CD8-positive, alpha-beta T cell (primary cell): ENCODE measurements at regions of chr20 and their contacts with region 1.

Region 1: GRCh38 chr20:44990425-44990824 is 24.1 kb downstream of the STK4 start:
- DNase-seq: peak in 3 of 9 experiments; percentile 22 to 55 (median 26)
- ATAC-seq: peak; percentile 54
- H3K4me3 ChIP-seq: peak overlapping the region; percentile 23 to 24
- H3K4me3 Mint-ChIP-seq: peak overlapping the region; percentile 82
- H3K27ac ChIP-seq: peak overlapping the region; percentile 11 to 69
- H3K27ac Mint-ChIP-seq: peak overlapping the region; percentile 95
- H3K4me1 ChIP-seq: peaks cover 57% of the 10 kb centered on the region
- H3K4me1 Mint-ChIP-seq: peaks cover 84% of the 10 kb centered on the region
- H3K27me3 ChIP-seq: no peaks in the 10 kb centered on the region
- H3K27me3 Mint-ChIP-seq: no peaks in the 10 kb centered on the region
- CTCF ChIP-seq: no peak

Region 2: GRCh38 chr20:44960103-44960852 is 30.1 kb before region 1 on chr20 and contains the start of gene TOMM34:
- CTCF ChIA-PET with region 1: interaction called, 6 read pairs
- POLR2A ChIA-PET with region 1: interaction called, 6 read pairs
- intact Hi-C with region 1: loop called (anchors 1 to 5 kb)
- DNase-seq: peak; percentile 84 to 97 (median 95)
- ATAC-seq: peak; percentile 94
- H3K4me3 ChIP-seq: peak within 1 kb of the TSS; percentile 70 to 80
- H3K4me3 Mint-ChIP-seq: peak within 1 kb of the TSS; percentile 96
- H3K27ac ChIP-seq: peak within 1 kb of the TSS; percentile 58 to 60
- H3K27ac Mint-ChIP-seq: peak within 1 kb of the TSS; percentile 96
- H3K4me1 ChIP-seq: peaks cover 32% of the 10 kb centered on the region
- H3K4me1 Mint-ChIP-seq: peaks cover 56% of the 10 kb centered on the region
- H3K27me3 ChIP-seq: no peaks in the 10 kb centered on the region
- H3K27me3 Mint-ChIP-seq: no peaks in the 10 kb centered on the region
- CTCF ChIP-seq: no peak
- total RNA-seq, gene TOMM34: 11.9 to 12.4 TPM

Region 3: GRCh38 chr20:44966030-44966961 is 24.1 kb before region 1 on chr20 and contains the start of gene STK4:
- CTCF ChIA-PET with region 1: interaction called, 6 read pairs
- POLR2A ChIA-PET with region 1: interaction called, 6 read pairs
- intact Hi-C with region 1: loop called (anchors 2 kb)
- DNase-seq: peak; percentile 90 to 99 (median 96)
- ATAC-seq: peak; percentile 76
- H3K4me3 ChIP-seq: peak within 1 kb of the TSS; percentile 96 to 97
- H3K4me3 Mint-ChIP-seq: peak within 1 kb of the TSS; percentile 91
- H3K27ac ChIP-seq: peak within 1 kb of the TSS; percentile 82 to 93
- H3K27ac Mint-ChIP-seq: peak within 1 kb of the TSS; percentile 89
- H3K4me1 ChIP-seq: peaks cover 28% of the 10 kb centered on the region
- H3K4me1 Mint-ChIP-seq: peaks cover 51% of the 10 kb centered on the region
- H3K27me3 ChIP-seq: no peaks in the 10 kb centered on the region
- H3K27me3 Mint-ChIP-seq: no peaks in the 10 kb centered on the region
- CTCF ChIP-seq: no peak
- total RNA-seq, gene STK4: 253 to 259 TPM

Region 4: GRCh38 chr20:44979090-44979621 is 11.3 kb before region 1 on chr20:
- CTCF ChIA-PET with region 1: interaction called, 3 read pairs
- POLR2A ChIA-PET with region 1: interaction called, 11 read pairs
- intact Hi-C with region 1: loop called in 1 of 2 experiments (anchors 1 kb)
- DNase-seq: peak in 8 of 9 experiments; percentile 54 to 95 (median 72)
- ATAC-seq: peak; percentile 83
- H3K4me3 ChIP-seq: peak overlapping the region; percentile 4 to 36
- H3K4me3 Mint-ChIP-seq: peak overlapping the region; percentile 68
- H3K27ac ChIP-seq: peak overlapping the region; percentile 87 to 95
- H3K27ac Mint-ChIP-seq: peak overlapping the region; percentile 94
- H3K4me1 ChIP-seq: peaks cover 70% of the 10 kb centered on the region
- H3K4me1 Mint-ChIP-seq: peaks cover 83% of the 10 kb centered on the region
- H3K27me3 ChIP-seq: no peaks in the 10 kb centered on the region
- H3K27me3 Mint-ChIP-seq: no peaks in the 10 kb centered on the region
- CTCF ChIP-seq: no peak

Region 5: GRCh38 chr20:45011108-45011526 is 20.7 kb after region 1 on chr20:
- CTCF ChIA-PET with region 1: interaction called, 7 read pairs
- POLR2A ChIA-PET with region 1: interaction called, 3 read pairs
- intact Hi-C with region 1: loop called in 1 of 2 experiments (anchors 2 kb)
- DNase-seq: peak in 8 of 9 experiments; percentile 14 to 74 (median 57)
- ATAC-seq: peak; percentile 66
- H3K4me3 ChIP-seq: no peak overlapping the region
- H3K4me3 Mint-ChIP-seq: no peak overlapping the region
- H3K27ac ChIP-seq: peak overlapping the region in 1 of 2 experiments; percentile 29
- H3K27ac Mint-ChIP-seq: peak overlapping the region; percentile 35
- H3K4me1 ChIP-seq: peaks cover 23% of the 10 kb centered on the region
- H3K4me1 Mint-ChIP-seq: peaks cover 70% of the 10 kb centered on the region
- H3K27me3 ChIP-seq: no peaks in the 10 kb centered on the region
- H3K27me3 Mint-ChIP-seq: no peaks in the 10 kb centered on the region
- CTCF ChIP-seq: peak; percentile 74

Region 6: GRCh38 chr20:45036044-45036755 is 45.8 kb after region 1 on chr20:
- CTCF ChIA-PET with region 1: no interaction called
- POLR2A ChIA-PET with region 1: no interaction called
- intact Hi-C with region 1: loop called in 1 of 2 experiments (anchors 5 kb)
- DNase-seq: peak in 1 of 9 experiments; percentile 25
- ATAC-seq: no peak
- H3K4me3 ChIP-seq: no peak overlapping the region
- H3K4me3 Mint-ChIP-seq: no peak overlapping the region
- H3K27ac ChIP-seq: no peak overlapping the region
- H3K27ac Mint-ChIP-seq: peak overlapping the region; percentile 11
- H3K4me1 ChIP-seq: peaks cover 78% of the 10 kb centered on the region
- H3K4me1 Mint-ChIP-seq: peaks cover 84% of the 10 kb centered on the region
- H3K27me3 ChIP-seq: no peaks in the 10 kb centered on the region
- H3K27me3 Mint-ChIP-seq: no peaks in the 10 kb centered on the region
- CTCF ChIP-seq: no peak